Activated CD8-positive, alpha-beta T cell treated with anti-CD3 and anti-CD28 coated beads, Interleukin-2, amount 10 ng/mL, durations not matched to agents 7 days and 5 days (primary cell): ENCODE measurements at regions of chr1 and their contacts with region 1.

Region 1: GRCh38 chr1:234373064-234373958 is at the start of gene COA6:
- DNase-seq: peak; percentile 94
- ATAC-seq: peak; percentile 90
- H3K4me3 Mint-ChIP-seq: peak within 1 kb of the TSS; percentile 97
- H3K27ac Mint-ChIP-seq: peak within 1 kb of the TSS; percentile 100
- H3K4me1 Mint-ChIP-seq: peaks cover 37% of the 10 kb centered on the region
- H3K27me3 Mint-ChIP-seq: no peaks in the 10 kb centered on the region
- total RNA-seq, gene COA6: 39.2 to 40.0 TPM

Region 2: GRCh38 chr1:234326497-234327366 is 46.6 kb before region 1 on chr1:
- CTCF ChIA-PET with region 1: interaction called, 14 read pairs
- POLR2A ChIA-PET with region 1: interaction called, 3 read pairs
- DNase-seq: peak; percentile 77
- ATAC-seq: peak; percentile 92
- H3K4me3 Mint-ChIP-seq: peak overlapping the region; percentile 64
- H3K27ac Mint-ChIP-seq: no peak overlapping the region
- H3K4me1 Mint-ChIP-seq: peaks cover 26% of the 10 kb centered on the region
- H3K27me3 Mint-ChIP-seq: peaks cover 5% of the 10 kb centered on the region

Region 3: DNA sequence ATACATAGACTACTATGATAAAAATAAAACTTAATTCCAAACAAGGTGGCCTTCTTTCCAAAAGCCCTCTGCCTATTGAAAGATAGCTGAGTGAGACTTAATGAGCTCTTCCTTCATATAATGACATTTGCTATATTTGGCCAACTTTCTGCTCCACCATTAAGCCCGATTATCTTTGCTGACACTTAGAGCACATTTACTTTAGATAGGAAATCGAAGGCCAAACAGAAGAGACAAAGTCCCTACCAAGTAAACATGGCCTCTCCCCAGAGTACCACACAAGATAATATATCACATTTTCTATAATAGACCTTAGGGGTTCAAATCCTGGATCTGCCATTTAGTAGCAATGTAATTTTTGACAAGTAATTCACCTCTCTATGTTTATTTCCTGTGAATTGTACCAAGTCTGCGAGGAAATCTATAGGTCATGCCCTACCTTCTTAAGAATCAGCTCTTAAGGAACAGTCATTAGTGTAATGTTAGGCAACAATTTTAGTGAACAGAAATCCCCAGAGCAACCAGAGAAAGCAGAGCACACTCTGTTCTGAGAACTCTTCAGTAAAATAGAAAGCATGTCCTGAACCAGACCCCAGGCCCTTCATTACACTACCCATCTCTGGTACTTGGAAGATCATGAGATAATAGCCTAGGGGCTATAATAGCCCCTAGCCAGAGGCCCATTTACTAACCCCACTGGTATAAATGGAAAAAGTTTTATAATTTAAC is 17.4 kb before region 1 on chr1:
- CTCF ChIA-PET with region 1: interaction called, 17 read pairs
- POLR2A ChIA-PET with region 1: interaction called, 24 read pairs
- DNase-seq: no peak
- ATAC-seq: no peak
- H3K4me3 Mint-ChIP-seq: peak overlapping the region; percentile 79
- H3K27ac Mint-ChIP-seq: no peak overlapping the region
- H3K4me1 Mint-ChIP-seq: peaks cover 12% of the 10 kb centered on the region
- H3K27me3 Mint-ChIP-seq: peaks cover 20% of the 10 kb centered on the region

Region 4: DNA sequence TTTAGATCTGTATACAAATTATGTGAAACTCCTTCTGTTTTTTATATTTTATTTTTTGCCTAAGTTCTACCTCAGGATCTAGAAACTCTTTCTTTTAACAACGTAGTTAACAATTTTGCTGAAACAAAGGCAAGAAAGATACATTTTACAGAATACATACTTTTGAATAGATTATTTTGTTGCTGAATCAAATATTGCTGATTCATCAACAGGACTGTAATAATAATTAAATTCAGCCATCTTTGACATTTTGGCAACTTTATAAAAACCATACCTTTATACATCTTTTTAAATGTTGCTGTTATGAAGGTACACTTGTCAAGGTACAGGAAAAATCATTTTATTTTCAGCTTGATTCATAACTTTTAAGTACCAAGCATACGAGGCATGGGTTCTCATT is 10.8 kb before region 1 on chr1:
- CTCF ChIA-PET with region 1: interaction called, 17 read pairs
- POLR2A ChIA-PET with region 1: interaction called, 24 read pairs
- DNase-seq: no peak
- ATAC-seq: no peak
- H3K4me3 Mint-ChIP-seq: no peak overlapping the region
- H3K27ac Mint-ChIP-seq: no peak overlapping the region
- H3K4me1 Mint-ChIP-seq: peaks cover 10% of the 10 kb centered on the region
- H3K27me3 Mint-ChIP-seq: peaks cover 3% of the 10 kb centered on the region

Region 5: GRCh38 chr1:234409328-234409727 is 36.0 kb after region 1 on chr1:
- CTCF ChIA-PET with region 1: no interaction called
- POLR2A ChIA-PET with region 1: no interaction called
- DNase-seq: no peak
- ATAC-seq: no peak
- H3K4me3 Mint-ChIP-seq: no peak overlapping the region
- H3K27ac Mint-ChIP-seq: no peak overlapping the region
- H3K4me1 Mint-ChIP-seq: peaks cover 3% of the 10 kb centered on the region
- H3K27me3 Mint-ChIP-seq: no peaks in the 10 kb centered on the region